ENCODE measurements at regions of chr6 and their contacts with region 1.

Region 1: DNA sequence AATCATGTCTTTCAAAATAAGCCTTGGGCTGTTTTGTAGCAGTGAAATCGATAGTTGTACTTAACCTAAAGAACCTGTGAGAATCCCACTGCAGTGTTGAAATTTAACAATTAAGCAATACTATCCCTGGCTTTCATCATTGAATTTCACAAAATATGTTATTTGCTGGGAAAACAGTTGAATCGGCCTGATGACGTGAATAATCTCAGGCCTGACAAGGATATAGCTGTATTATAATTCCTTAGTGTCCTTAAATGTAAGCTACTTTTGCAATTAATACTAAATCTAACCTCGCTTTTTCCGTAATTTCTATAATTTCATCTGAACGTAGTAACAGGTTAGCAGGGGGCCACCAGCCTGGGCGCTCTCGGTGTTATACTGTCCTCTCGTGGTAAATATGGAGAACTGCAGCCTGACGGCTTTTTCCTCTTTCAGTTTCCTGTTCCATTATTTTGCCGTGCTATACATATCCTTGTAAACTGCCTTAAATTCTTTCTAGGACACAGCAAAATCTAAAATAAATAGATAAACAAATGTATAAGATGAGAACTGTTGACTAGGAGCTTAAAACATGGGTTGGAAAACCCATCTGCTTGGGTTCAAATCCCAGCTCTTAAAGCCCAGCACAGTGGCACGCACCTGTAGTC is 24.0 kb downstream of the MTFR2 start:
- DNase-seq: peak; percentile 73
- H3K4me3 ChIP-seq: peak overlapping the region in 3 of 4 donors; percentile 5 to 29 (median 10)
- H3K27ac ChIP-seq: no peak overlapping the region
- H3K4me1 ChIP-seq: peaks cover 0 to 10% (median 2%) of the 10 kb centered on the region in 4 donors
- H3K27me3 ChIP-seq: no peaks in the 10 kb centered on the region
- CTCF ChIP-seq: peak; percentile 98 to 100 (median 100)
- EP300 ChIP-seq: no peak
- POLR2A ChIP-seq: no peak

Region 2: DNA sequence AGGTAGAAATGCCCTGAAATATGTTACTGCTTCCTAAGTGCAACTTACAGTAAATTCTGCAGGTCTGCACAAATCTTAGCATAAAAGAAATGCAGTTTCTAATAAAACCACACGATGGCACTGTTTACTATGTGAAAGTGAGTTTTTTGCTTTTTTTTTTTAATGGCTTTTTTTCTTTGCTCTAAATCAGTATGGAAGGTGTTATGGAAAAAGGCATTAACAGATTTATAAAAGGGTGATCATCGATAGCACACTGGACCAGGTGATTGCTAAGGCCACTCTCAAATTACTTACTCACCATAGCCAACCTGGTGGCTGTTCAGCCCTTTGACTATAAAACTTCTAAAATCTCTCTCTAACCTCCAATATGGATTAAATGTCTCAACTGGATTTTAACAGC is 774.5 kb before region 1 on chr6:
- intact Hi-C with region 1: loop called (anchors 2 kb)
- DNase-seq: no peak
- H3K4me3 ChIP-seq: no peak overlapping the region
- H3K27ac ChIP-seq: no peak overlapping the region
- H3K4me1 ChIP-seq: no peaks in the 10 kb centered on the region
- H3K27me3 ChIP-seq: no peaks in the 10 kb centered on the region
- CTCF ChIP-seq: peak; percentile 25 to 65 (median 38)
- EP300 ChIP-seq: no peak
- POLR2A ChIP-seq: no peak

Region 3: DNA sequence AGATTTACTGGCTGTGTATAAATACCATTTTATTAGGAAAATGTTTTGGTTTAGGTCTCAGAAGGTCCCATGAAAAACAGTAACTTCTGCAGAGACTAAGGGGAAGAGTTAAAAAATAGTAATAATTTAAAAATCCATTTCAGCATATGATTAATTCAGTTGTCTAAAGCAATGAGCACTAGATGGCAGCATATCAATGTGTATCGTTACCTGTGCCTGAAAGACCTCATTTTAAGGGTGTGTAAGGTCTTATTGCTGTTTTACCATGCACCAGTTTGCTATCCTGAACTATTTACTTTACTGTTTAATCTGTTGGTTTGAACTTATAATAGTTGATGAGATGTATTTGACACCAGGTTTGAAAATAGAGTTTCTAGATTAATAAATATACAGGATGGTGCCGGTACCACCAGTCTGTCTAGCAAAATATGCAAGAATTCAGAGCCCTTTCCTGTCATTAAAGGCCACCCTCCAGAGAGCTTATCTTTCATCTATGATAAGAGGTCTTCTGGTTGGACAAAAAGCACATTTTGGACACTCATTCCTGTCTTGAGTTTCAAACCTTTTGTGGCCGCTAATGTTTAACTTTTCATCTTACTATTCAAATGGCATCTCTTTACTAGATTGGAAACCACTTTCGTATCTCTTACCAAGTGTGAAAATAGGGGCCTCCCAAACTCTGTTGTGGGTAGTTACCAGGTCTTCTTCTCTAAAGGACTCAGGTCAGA is 719.7 kb before region 1 on chr6:
- intact Hi-C with region 1: loop called (anchors 5 kb)
- DNase-seq: no peak
- H3K4me3 ChIP-seq: no peak overlapping the region
- H3K27ac ChIP-seq: no peak overlapping the region
- H3K4me1 ChIP-seq: no peaks in the 10 kb centered on the region
- H3K27me3 ChIP-seq: no peaks in the 10 kb centered on the region
- CTCF ChIP-seq: peak in 3 of 4 experiments; percentile 24 to 42 (median 42)
- EP300 ChIP-seq: no peak
- POLR2A ChIP-seq: no peak

Region 4: GRCh38 chr6:135535989-135536414 is 690.1 kb before region 1 on chr6:
- intact Hi-C with region 1: loop called (anchors 2 kb)
- DNase-seq: no peak
- H3K4me3 ChIP-seq: no peak overlapping the region
- H3K27ac ChIP-seq: no peak overlapping the region
- H3K4me1 ChIP-seq: no peaks in the 10 kb centered on the region
- H3K27me3 ChIP-seq: no peaks in the 10 kb centered on the region
- CTCF ChIP-seq: peak in 3 of 4 experiments; percentile 32 to 52 (median 33)
- EP300 ChIP-seq: no peak
- POLR2A ChIP-seq: no peak

Region 5: GRCh38 chr6:136031982-136032381 is 194.2 kb before region 1 on chr6:
- intact Hi-C with region 1: loop called (anchors 2 kb)
- DNase-seq: no peak
- H3K4me3 ChIP-seq: no peak overlapping the region
- H3K27ac ChIP-seq: no peak overlapping the region
- H3K4me1 ChIP-seq: peaks cover 0 to 5% (median 0%) of the 10 kb centered on the region in 4 donors
- H3K27me3 ChIP-seq: no peaks in the 10 kb centered on the region
- CTCF ChIP-seq: peak in 1 of 4 experiments; percentile 28
- EP300 ChIP-seq: no peak
- POLR2A ChIP-seq: no peak

Measured in sigmoid colon (tissue), 7 donors.